Panc1 (cell line): ENCODE measurements at regions of chr3 and their contacts with region 1.

Region 1: GRCh38 chr3:73502609-73503583 is 121.8 kb downstream of the PDZRN3 start:
- DNase-seq: peak; percentile 22
- ATAC-seq: peak; percentile 78
- H3K4me3 ChIP-seq: no peak overlapping the region
- H3K27ac ChIP-seq: no peak overlapping the region
- H3K4me1 ChIP-seq: no peaks in the 10 kb centered on the region
- H3K27me3 ChIP-seq: no peaks in the 10 kb centered on the region; the same call in 1 of the 2 replicates
- CTCF ChIP-seq: peak; percentile 79

Region 2: DNA sequence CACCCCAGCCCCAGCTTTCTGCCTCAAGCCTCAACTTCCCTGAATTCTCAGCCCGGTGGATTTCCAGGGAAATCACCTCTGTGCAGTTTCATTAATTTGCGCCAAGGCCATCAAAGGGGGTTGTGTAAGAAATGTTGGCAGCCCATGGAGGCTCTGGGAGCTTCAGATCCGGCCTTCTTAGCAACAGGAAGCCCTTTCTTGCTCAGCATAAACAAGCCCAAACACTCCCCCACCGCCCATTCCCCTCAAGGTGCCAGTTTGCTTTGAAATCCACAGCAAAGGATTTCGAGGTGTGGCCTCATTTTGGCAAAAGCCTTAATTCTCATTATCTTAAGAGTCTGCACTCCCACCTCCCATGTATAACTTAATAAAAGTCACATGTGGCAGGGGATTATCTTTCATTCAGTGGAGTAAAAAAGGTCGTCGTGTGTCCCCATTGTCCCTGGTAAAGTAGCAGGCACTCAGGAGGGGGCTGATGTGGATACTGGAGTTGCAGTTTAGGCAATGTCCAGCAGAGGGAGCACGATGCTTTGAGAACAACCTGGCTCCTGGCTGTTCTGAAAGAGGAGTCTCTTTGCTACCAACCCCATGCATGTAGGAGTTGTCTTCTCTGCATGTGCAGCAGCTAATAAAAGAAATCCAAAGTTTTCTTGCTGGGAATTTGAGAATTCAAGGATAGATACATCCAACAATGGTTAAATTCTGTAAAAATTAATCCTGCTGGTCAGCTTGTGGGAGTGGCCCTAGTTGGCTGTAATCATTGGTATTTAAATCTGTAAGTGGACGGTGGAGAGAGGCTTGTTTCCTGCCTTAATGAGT is 401.9 kb before region 1 on chr3:
- CTCF ChIA-PET with region 1: no interaction called
- POLR2A ChIA-PET with region 1: no interaction called
- in situ Hi-C with region 1: no loop called
- intact Hi-C with region 1: loop called (anchors 1 kb)
- DNase-seq: peak; percentile 48
- ATAC-seq: peak; percentile 92
- H3K4me3 ChIP-seq: no peak overlapping the region
- H3K27ac ChIP-seq: no peak overlapping the region
- H3K4me1 ChIP-seq: no peaks in the 10 kb centered on the region
- H3K27me3 ChIP-seq: no peaks in the 10 kb centered on the region
- CTCF ChIP-seq: peak; percentile 83

Region 3: GRCh38 chr3:73453666-73454065 is 49.2 kb before region 1 on chr3:
- CTCF ChIA-PET with region 1: no interaction called
- POLR2A ChIA-PET with region 1: no interaction called
- in situ Hi-C with region 1: no loop called
- intact Hi-C with region 1: loop called (anchors 2 kb)
- DNase-seq: no peak
- ATAC-seq: no peak
- H3K4me3 ChIP-seq: no peak overlapping the region
- H3K27ac ChIP-seq: no peak overlapping the region
- H3K4me1 ChIP-seq: no peaks in the 10 kb centered on the region
- H3K27me3 ChIP-seq: no peaks in the 10 kb centered on the region
- CTCF ChIP-seq: no peak

Region 4: DNA sequence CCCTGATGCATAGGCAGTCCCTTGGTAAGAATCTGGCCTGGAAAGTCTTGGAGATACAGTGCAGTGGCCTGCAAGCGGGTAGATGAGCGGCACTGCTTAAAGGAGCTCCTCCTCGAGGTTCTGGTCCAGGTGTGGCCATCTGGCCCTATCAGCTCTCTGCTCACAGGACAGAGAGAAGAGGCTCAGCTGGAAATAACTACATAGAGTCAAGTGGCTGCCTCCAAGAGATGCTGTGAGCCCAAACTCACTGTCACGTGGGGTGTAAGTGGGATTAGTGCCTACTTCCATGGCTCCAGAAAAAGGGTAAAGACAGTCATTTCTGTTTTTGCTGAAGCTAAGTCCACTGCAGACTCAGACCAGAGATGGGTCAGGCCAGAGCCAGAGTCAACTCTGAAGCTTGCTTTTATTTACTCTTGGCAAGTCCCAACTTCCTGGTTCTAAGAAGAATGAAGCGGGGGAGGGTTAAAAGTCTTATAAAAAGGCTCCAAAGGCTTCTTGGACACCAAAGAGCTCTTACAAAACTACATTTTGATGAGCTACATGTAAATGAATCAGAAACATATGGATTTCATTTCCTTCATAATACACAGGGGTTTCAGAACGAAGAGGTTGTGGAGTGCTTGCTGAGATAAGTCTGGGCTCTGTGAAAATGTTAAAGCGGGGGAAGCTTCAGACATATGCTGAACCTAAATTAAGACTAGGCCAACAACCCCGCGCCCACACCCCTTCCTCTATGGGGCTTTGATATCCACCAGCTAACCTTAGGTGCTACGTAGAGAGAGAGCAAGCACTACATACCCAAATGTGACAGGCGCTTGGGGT is 44.7 kb after region 1 on chr3:
- CTCF ChIA-PET with region 1: no interaction called
- POLR2A ChIA-PET with region 1: no interaction called
- in situ Hi-C with region 1: no loop called
- intact Hi-C with region 1: no loop called
- DNase-seq: no peak
- ATAC-seq: no peak
- H3K4me3 ChIP-seq: no peak overlapping the region
- H3K27ac ChIP-seq: no peak overlapping the region
- H3K4me1 ChIP-seq: no peaks in the 10 kb centered on the region
- H3K27me3 ChIP-seq: no peaks in the 10 kb centered on the region
- CTCF ChIP-seq: no peak

Region 5: DNA sequence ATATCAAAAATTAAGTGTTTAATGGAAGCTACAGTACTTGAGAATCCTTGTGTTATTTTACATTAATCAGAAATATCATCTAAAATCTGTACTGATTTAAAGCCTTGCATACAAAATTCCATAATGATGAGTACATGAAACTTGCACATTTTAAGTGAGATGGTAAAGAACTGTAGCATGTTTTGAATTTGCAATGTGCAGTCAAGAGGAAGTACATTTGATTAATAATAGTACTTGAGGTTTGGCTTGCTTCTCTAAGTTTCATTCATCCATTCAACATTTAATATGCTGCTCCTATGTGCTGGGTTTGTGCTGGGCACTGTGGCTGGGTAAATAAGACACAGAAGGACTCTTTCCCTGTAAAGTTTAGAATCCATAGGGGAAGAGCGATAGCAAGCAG is 779.3 kb after region 1 on chr3:
- CTCF ChIA-PET with region 1: no interaction called
- POLR2A ChIA-PET with region 1: no interaction called
- in situ Hi-C with region 1: no loop called
- intact Hi-C with region 1: no loop called
- DNase-seq: no peak
- ATAC-seq: no peak
- H3K4me3 ChIP-seq: no peak overlapping the region
- H3K27ac ChIP-seq: no peak overlapping the region
- H3K4me1 ChIP-seq: no peaks in the 10 kb centered on the region
- H3K27me3 ChIP-seq: no peaks in the 10 kb centered on the region
- CTCF ChIP-seq: no peak